Dorsolateral prefrontal cortex (tissue), 120 donors: ENCODE measurements at regions of chr4 and their contacts with region 1.

Region 1: DNA sequence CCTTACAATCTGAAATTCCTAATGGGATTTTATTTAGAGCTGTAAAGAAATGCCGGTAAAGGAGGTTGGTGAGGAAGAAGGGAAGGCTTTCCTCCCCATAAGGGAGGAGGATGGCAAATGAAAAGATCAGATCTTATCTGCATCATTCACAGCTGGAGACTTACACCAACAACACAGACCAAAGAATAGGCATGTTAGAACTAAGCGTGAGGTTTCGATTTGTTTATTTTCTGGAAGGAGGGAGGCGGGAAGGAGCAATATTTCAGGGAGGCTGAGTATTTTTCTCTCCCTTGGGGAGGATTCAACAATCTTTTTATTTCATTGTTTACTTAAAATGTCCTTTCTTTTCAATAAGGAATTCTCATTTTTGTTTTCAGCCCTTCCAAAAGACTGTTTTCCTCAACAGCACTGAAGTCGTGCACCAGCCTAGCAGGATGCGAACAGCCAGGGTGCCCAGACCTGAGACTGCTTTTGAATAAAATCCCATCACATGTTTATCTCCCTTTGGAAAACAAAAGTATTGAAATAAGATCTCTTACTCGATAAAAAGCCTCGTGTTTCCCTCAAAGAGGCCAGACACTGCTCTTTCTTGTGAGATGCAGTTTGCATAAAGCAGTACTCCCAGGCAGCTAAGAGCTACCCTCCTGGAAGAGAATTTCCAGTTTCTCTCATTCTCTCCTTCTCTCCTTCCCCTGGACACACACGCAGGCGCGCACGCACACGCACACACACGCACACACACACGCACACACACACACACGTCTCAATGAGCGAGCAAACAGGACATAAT is 236.1 kb downstream of the MGST2 start:
- DNase-seq: no peak
- H3K4me3 ChIP-seq: peak overlapping the region; percentile 8 to 70 (median 53)
- H3K27ac ChIP-seq: peak overlapping the region in 51 of 59 donors; percentile 1 to 84 (median 68)
- H3K27me3 ChIP-seq: no peaks in the 10 kb centered on the region
- CTCF ChIP-seq: no peak

Region 2: GRCh38 chr4:140004549-140004895 is 102.8 kb after region 1 on chr4:
- intact Hi-C with region 1: loop called in 1 of 2 experiments (anchors 5 kb)
- DNase-seq: peak in 9 of 10 donors; percentile 33 to 86 (median 51)
- H3K4me3 ChIP-seq: peak overlapping the region; percentile 30 to 76 (median 54)
- H3K27ac ChIP-seq: peak overlapping the region in 28 of 59 donors; percentile 6 to 78 (median 46)
- H3K27me3 ChIP-seq: no peaks in the 10 kb centered on the region
- CTCF ChIP-seq: peak in 3 of 56 donors; percentile 9 to 13 (median 12)